ENCODE measurements at regions of chr18 and their contacts with region 1.

Region 1: DNA sequence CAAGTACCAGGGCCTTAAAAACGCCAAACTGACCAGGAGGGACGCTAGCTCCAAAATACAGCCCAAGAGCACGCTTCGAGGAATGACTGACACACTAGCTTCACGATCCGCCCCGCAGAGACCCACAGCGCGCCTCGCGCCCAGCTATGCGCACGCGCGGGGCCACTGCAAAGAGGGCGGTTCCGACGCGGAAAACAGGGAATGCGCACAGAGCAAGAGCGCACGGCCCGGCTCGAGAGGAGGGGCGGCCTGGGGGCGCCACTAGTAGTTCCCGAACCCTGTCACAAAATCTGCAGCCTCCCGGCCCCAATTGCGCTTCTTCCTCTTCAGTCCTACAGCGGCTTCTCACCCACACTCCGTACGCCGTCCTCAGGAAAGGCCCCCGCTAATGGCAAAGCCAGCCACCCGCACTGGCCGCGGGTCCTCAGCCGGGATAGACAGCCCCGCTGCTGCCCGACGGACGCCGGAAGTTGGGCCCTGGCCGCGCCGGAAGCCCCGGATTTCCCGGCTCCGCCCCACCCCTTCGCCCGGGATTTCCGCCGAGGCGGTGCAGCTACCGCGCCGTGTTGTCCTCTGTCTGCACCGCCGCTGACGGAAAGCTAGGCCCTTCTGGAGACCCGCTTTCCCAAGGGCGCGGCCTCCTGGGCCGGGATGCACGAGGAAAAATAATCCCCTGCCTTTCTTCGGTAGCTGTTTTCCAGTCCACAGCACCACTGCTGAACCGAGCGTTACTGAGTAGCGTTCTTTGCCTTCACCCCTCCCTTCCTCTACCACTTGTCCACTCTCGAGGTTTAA is at the start of gene HDHD2:
- DNase-seq: peak; percentile 18 to 88
- H3K4me3 ChIP-seq: peak within 1 kb of the TSS; percentile 72 to 98
- H3K27ac ChIP-seq: peak within 1 kb of the TSS; percentile 86 to 96
- H3K4me1 ChIP-seq: peaks cover 6 to 10% of the 10 kb centered on the region in 2 donors
- H3K27me3 ChIP-seq: no peaks in the 10 kb centered on the region
- CTCF ChIP-seq: no peak
- total RNA-seq, gene HDHD2: 3.5 TPM

Region 2: GRCh38 chr18:46104128-46104911 is 1045.9 kb before region 1 on chr18 and contains the start of gene HAUS1:
- intact Hi-C with region 1: loop called (anchors 10 kb)
- DNase-seq: peak; percentile 63 to 95
- H3K4me3 ChIP-seq: peak within 1 kb of the TSS; percentile 72 to 89
- H3K27ac ChIP-seq: peak within 1 kb of the TSS; percentile 73 to 79
- H3K4me1 ChIP-seq: peaks cover 3 to 4% of the 10 kb centered on the region in 2 donors
- H3K27me3 ChIP-seq: no peaks in the 10 kb centered on the region
- CTCF ChIP-seq: no peak
- total RNA-seq, gene HAUS1: 5.0 TPM

Region 3: GRCh38 chr18:46859855-46860254 is 290.4 kb before region 1 on chr18:
- intact Hi-C with region 1: no loop called
- DNase-seq: no peak
- H3K4me3 ChIP-seq: no peak overlapping the region
- H3K27ac ChIP-seq: no peak overlapping the region
- H3K4me1 ChIP-seq: no peaks in the 10 kb centered on the region
- H3K27me3 ChIP-seq: no peaks in the 10 kb centered on the region
- CTCF ChIP-seq: no peak

Region 4: DNA sequence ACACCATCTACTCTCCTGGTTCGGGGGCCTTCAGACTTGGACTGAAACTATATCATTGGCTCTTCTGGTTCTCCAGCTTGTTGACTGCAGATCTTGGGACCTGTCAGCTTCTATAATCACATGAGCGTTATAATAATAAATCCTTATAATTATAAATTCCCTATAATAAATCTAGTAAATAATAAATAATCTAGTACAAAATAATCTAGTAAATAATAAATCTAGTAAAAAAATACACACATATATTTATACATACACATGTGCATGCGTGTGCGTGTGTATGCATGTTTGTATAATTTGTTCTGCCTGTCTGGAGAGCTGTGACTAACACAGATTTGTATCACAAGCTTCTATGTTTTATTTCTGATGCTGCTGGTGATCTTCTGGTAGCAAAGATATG is 192.0 kb before region 1 on chr18:
- intact Hi-C with region 1: no loop called
- DNase-seq: no peak
- H3K4me3 ChIP-seq: no peak overlapping the region
- H3K27ac ChIP-seq: no peak overlapping the region
- H3K4me1 ChIP-seq: no peaks in the 10 kb centered on the region
- H3K27me3 ChIP-seq: no peaks in the 10 kb centered on the region
- CTCF ChIP-seq: no peak

Region 5: DNA sequence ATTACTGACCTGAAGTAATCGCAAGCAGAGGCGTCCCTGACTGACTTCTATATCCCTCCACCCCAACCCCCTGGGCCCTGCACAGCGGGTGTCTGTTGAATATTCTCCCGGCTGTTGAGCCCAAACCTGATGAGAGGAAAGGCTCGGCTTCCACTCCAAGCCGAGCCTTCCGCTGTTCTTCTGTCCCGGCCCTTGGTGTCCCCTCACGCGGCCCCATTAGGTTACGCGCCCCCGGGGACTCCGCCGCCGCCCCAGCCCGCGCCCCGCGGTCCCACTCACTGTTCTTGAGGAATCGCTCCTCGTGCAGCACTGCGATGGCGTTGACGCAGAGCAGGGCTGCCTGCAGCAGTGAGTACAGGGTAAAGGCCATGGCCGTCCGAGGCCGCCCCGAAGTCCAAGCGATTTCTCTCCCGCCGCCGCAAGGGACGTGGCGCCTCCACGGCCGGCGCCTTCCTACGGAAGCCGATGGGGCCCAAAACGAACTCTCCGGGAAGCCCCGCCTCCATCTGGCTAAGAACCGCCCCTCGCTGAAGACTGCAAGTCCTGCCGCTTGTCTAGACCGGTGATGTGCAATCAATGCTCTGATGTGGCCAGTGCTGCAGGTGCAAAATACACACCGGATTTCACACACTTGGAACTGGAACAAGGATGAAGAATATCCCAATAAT is 25.8 kb after region 1 on chr18 and contains the start of gene IER3IP1:
- intact Hi-C with region 1: loop called (anchors 1 kb)
- DNase-seq: peak; percentile 43 to 94
- H3K4me3 ChIP-seq: peak within 1 kb of the TSS; percentile 92
- H3K27ac ChIP-seq: peak within 1 kb of the TSS; percentile 75 to 78
- H3K4me1 ChIP-seq: peaks cover 3 to 13% of the 10 kb centered on the region in 2 donors
- H3K27me3 ChIP-seq: no peaks in the 10 kb centered on the region
- CTCF ChIP-seq: peak in 1 of 3 experiments; percentile 24
- total RNA-seq, gene IER3IP1: 10.0 TPM

Region 6: GRCh38 chr18:47254341-47254939 is 104.2 kb after region 1 on chr18:
- intact Hi-C with region 1: no loop called
- DNase-seq: no peak
- H3K4me3 ChIP-seq: no peak overlapping the region
- H3K27ac ChIP-seq: no peak overlapping the region
- H3K4me1 ChIP-seq: peaks cover 0 to 3% of the 10 kb centered on the region in 2 donors
- H3K27me3 ChIP-seq: peaks cover 11% of the 10 kb centered on the region
- CTCF ChIP-seq: no peak